Activated B cell treated with CpG ODN at 0.5 μM for 24 hours (primary cell): ENCODE measurements at regions of chr2 and their contacts with region 1.

Region 1: GRCh38 chr2:239293775-239294430 is 106.9 kb downstream of the HDAC4 start:
- DNase-seq: no peak
- ATAC-seq: peak; percentile 85
- H3K4me3 Mint-ChIP-seq: peak overlapping the region; percentile 28
- H3K27ac Mint-ChIP-seq: no peak overlapping the region
- H3K4me1 Mint-ChIP-seq: peaks cover 71% of the 10 kb centered on the region
- H3K27me3 Mint-ChIP-seq: peaks cover 4% of the 10 kb centered on the region
- CTCF ChIP-seq: no peak

Region 2: DNA sequence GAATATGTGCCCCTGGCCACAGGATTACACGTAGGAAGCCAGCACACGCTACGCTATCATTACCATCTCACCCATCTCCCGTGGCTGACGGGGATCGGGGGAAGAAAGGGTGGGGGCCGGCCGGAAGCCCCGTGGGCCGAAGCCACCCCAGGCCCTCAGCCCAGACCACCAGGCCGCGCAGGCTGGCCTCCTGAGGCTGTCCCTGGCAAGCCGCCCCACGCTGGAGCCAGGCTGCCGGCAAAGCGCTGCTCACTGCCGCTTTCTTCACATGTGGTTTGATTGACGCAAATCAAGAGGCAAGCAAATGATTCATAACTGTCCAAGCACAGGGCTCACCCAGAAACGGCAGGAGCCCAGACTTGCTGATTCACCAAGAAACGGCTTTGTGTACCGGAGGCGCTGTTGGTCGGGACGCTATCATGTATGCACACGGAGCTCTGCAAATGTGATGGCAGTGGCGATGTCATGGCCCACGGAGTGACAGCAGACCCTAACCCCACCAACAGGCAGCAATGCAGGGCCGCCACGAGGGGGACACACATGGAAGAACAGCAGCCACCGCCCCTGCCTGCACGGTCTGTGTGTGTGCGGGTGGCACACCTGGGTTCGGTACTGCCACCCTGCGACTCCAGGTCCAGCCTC is 18.7 kb before region 1 on chr2:
- CTCF ChIA-PET with region 1: interaction called, 3 read pairs
- POLR2A ChIA-PET with region 1: no interaction called
- intact Hi-C with region 1: loop called (anchors 1 kb)
- DNase-seq: peak; percentile 27
- ATAC-seq: peak; percentile 92
- H3K4me3 Mint-ChIP-seq: peak overlapping the region; percentile 52
- H3K27ac Mint-ChIP-seq: no peak overlapping the region
- H3K4me1 Mint-ChIP-seq: peaks cover 17% of the 10 kb centered on the region
- H3K27me3 Mint-ChIP-seq: peaks cover 50% of the 10 kb centered on the region
- CTCF ChIP-seq: no peak

Region 3: GRCh38 chr2:239380831-239381708 is 87.2 kb after region 1 on chr2:
- CTCF ChIA-PET with region 1: no interaction called
- POLR2A ChIA-PET with region 1: interaction called, 10 read pairs
- intact Hi-C with region 1: no loop called
- DNase-seq: peak; percentile 55
- ATAC-seq: peak; percentile 66
- H3K4me3 Mint-ChIP-seq: peak overlapping the region; percentile 85
- H3K27ac Mint-ChIP-seq: peak overlapping the region; percentile 91
- H3K4me1 Mint-ChIP-seq: peaks cover 43% of the 10 kb centered on the region
- H3K27me3 Mint-ChIP-seq: no peaks in the 10 kb centered on the region
- CTCF ChIP-seq: no peak

Region 4: DNA sequence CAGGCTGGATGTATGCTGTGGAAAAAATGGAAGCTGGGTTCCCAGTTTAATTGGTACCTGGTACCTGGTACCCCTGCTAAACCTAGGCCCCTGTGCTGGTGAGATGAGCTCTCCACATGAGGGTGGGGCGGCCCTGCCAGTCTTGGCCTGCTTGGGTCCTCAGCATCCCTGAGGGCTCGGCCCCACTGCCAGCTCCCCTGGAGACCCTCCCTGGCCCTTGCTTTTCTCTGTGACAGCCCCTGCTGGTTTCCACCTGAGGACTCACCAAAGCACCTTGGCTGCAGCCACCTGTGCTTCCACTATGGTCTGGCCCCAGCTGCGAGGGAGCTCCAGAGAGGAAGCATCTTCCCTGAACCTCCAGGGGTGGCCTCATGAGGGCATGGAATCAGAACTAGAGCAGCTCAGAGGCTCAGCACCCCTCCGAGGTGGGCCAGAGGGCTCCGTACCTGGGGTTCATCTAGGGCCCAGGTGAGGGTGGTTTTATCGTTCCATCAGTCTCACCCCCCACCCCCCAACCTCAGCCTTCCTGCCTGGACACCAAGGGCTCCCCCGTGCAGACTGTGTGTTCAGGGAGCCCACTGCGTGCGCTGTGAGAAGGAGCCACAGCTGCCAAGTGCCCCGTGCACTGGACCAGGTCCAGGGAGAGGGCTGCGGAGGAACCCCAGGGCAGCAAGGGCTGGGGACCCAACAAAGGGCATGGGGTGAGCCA is 130.6 kb after region 1 on chr2:
- CTCF ChIA-PET with region 1: no interaction called
- POLR2A ChIA-PET with region 1: no interaction called
- intact Hi-C with region 1: no loop called
- DNase-seq: no peak
- ATAC-seq: no peak
- H3K4me3 Mint-ChIP-seq: no peak overlapping the region
- H3K27ac Mint-ChIP-seq: no peak overlapping the region
- H3K4me1 Mint-ChIP-seq: no peaks in the 10 kb centered on the region
- H3K27me3 Mint-ChIP-seq: peaks cover 12% of the 10 kb centered on the region
- CTCF ChIP-seq: no peak